ENCODE measurements at regions of chr14 and their contacts with region 1.

Region 1: GRCh38 chr14:22900081-22900799 is 17.2 kb downstream of the REM2 start:
- DNase-seq: peak; percentile 57
- ATAC-seq: peak; percentile 69
- H3K4me3 Mint-ChIP-seq: no peak overlapping the region
- H3K27ac Mint-ChIP-seq: peak overlapping the region; percentile 0
- H3K4me1 Mint-ChIP-seq: peaks cover 16% of the 10 kb centered on the region
- H3K27me3 Mint-ChIP-seq: no peaks in the 10 kb centered on the region

Region 2: GRCh38 chr14:22822571-22823098 is 77.6 kb before region 1 on chr14:
- CTCF ChIA-PET with region 1: interaction called, 10 read pairs
- POLR2A ChIA-PET with region 1: no interaction called
- intact Hi-C with region 1: loop called (anchors 1 kb)
- DNase-seq: peak; percentile 80
- ATAC-seq: peak; percentile 75
- H3K4me3 Mint-ChIP-seq: peak overlapping the region; percentile 55
- H3K27ac Mint-ChIP-seq: peak overlapping the region; percentile 25
- H3K4me1 Mint-ChIP-seq: peaks cover 27% of the 10 kb centered on the region
- H3K27me3 Mint-ChIP-seq: peaks cover 5% of the 10 kb centered on the region

Region 3: GRCh38 chr14:22886500-22887259 is 13.6 kb before region 1 on chr14:
- CTCF ChIA-PET with region 1: interaction called, 71 read pairs
- POLR2A ChIA-PET with region 1: no interaction called
- intact Hi-C with region 1: no loop called
- DNase-seq: peak; percentile 85
- ATAC-seq: peak; percentile 63
- H3K4me3 Mint-ChIP-seq: peak overlapping the region; percentile 70
- H3K27ac Mint-ChIP-seq: peak overlapping the region; percentile 83
- H3K4me1 Mint-ChIP-seq: peaks cover 50% of the 10 kb centered on the region
- H3K27me3 Mint-ChIP-seq: peaks cover 2% of the 10 kb centered on the region

Region 4: GRCh38 chr14:22910916-22911315 is 10.7 kb after region 1 on chr14:
- CTCF ChIA-PET with region 1: interaction called, 13 read pairs
- POLR2A ChIA-PET with region 1: interaction called, 5 read pairs
- intact Hi-C with region 1: no loop called
- DNase-seq: no peak
- ATAC-seq: peak; percentile 68
- H3K4me3 Mint-ChIP-seq: no peak overlapping the region
- H3K27ac Mint-ChIP-seq: no peak overlapping the region
- H3K4me1 Mint-ChIP-seq: peaks cover 36% of the 10 kb centered on the region
- H3K27me3 Mint-ChIP-seq: no peaks in the 10 kb centered on the region

Region 5: DNA sequence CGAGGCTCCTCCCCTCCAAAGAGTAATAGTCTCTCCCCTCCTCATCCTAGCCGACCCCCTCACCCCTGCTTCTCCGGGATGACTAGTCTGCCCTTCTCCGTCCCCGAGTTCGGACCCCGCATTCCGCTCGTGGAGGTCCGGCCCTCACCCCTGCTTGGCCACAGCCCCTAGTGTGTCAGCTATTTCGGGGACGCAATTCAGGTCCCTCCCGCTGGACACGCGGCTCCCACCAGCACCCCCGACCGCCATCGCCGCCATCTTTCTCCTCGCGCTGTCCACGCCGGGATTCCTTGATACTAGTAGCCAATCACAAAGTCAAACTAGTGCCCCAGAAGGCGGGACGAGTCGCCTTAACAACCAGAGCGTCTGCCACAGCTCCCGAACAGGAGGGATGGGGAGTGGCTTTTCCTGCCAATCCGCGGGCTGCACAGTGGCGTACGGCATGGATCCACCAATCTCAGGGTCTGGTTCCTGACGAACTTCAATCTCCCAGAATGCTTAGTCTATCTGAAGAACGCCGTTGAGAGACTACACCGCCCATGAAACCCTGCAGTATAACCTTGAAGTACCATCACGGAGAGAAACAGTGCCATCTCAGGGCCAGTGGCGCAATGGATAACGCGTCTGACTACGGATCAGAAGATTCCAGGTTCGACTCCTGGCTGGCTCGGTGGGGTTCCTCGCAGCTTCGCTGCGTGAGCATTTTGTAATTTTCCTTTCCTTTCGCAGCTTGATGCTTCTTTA is 29.0 kb after region 1 on chr14 and contains the start of gene PRMT5:
- CTCF ChIA-PET with region 1: interaction called, 15 read pairs
- POLR2A ChIA-PET with region 1: no interaction called
- intact Hi-C with region 1: no loop called
- DNase-seq: peak; percentile 99
- ATAC-seq: peak; percentile 98
- H3K4me3 Mint-ChIP-seq: no peak within 1 kb of the TSS
- H3K27ac Mint-ChIP-seq: no peak within 1 kb of the TSS
- H3K4me1 Mint-ChIP-seq: peaks cover 39% of the 10 kb centered on the region
- H3K27me3 Mint-ChIP-seq: no peaks in the 10 kb centered on the region
- total RNA-seq, gene PRMT5: 121 to 151 TPM